Testis (tissue), 5 donors: ENCODE measurements at regions of chr14 and their contacts with region 1.

Region 1: DNA sequence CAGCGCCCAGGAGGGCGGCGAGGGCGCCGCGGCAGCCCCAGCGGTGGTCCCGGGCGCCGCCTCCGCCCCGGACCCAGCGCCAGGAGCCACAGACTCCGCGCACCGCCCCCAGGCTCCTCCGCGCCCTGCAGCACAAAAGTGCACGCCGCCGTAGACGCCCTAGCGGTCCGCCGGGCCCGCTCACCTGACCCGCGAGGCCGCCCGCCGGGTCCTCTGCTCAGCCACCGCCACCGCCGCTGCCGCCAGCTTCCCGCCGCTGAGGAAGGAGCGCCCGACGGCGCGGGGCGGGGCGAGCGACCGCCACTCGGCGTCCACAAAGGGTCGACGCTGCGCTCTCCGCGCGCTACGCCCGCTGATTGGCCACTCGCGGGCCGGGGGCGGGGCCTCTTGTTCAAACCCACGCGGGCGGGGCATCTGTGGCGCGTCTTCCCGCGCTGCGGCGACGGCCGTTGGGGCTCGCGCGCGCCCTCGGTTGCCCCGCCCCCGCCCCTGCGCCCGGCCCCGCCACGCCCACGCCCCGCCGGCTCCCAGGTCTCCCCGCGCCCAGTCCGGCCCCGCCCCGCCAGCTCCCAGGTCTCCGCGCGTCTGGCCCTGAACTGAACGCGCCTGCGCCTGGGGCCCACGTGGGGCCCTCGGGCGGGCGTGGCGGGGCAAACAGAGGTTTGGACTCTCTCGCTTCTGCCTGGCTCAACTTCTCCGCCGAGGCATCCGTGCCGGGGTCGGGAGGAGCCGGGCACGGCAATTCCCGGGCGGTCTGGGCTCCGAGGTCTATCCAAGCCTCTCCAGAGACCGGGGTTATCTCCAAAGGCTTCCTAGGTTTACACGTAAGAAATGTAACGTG is at the start of gene CDCA4:
- DNase-seq: peak; percentile 98
- H3K4me3 ChIP-seq: peak within 1 kb of the TSS; percentile 78 to 82
- H3K27ac ChIP-seq: peak within 1 kb of the TSS; percentile 59 to 80
- H3K4me1 ChIP-seq: peaks cover 11% of the 10 kb centered on the region
- H3K27me3 ChIP-seq: no peaks in the 10 kb centered on the region
- CTCF ChIP-seq: peak in 1 of 3 experiments; percentile 2
- POLR2A ChIP-seq: peak; percentile 25
- total RNA-seq, gene CDCA4: 26.2 to 27.5 TPM

Region 2: GRCh38 chr14:104976198-104977007 is 44.6 kb before region 1 on chr14:
- intact Hi-C with region 1: loop called (anchors 10 kb)
- DNase-seq: peak; percentile 86
- H3K4me3 ChIP-seq: no peak overlapping the region
- H3K27ac ChIP-seq: no peak overlapping the region
- H3K4me1 ChIP-seq: peaks cover 16% of the 10 kb centered on the region
- H3K27me3 ChIP-seq: no peaks in the 10 kb centered on the region
- CTCF ChIP-seq: peak; percentile 80 to 89 (median 87)
- POLR2A ChIP-seq: no peak